ENCODE measurements at regions of chr15 and their contacts with region 1.

Region 1: DNA sequence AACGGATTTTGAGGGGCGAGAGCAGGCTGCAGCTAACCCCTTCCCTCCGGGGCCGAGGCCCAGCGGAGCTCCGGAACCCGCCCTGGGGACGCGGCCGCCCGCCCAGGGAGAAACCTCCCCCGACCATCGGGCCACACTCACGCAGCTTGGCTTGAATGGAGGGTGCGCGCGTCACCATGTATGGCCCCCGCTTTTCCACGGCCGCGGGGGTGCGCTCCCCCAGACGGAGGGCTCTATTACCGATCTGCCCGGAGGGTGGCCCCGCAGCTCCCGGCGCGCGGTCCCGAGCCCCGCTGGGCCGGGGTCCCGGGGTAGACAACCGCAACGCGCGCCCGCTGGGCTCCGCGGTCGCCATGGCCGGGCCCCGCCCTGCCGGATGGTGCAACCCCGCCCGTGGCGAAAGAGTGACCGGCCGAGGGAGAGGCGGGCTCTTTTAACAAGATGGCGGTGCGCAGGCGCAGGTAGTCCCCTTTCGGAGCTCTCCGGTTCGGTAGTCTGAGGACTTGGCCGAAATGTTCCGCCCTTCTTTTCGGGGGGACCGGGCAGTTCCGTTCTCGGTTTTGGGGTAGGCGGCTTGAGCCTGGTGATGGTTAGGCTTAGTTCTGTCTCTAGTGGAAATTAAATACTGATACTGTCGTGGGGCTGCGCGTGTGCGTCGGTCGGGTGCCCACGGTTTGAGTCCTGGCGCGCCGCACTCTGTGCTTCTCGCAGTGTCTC is at the start of gene FAM219B:
- DNase-seq: peak; percentile 60
- H3K4me3 ChIP-seq: peak within 1 kb of the TSS; percentile 81
- H3K27ac ChIP-seq: peak within 1 kb of the TSS; percentile 81
- H3K27me3 ChIP-seq: no peaks in the 10 kb centered on the region
- CTCF ChIP-seq: no peak
- polyA plus RNA-seq, gene FAM219B: 38.2 and 43.2 TPM in 2 replicates

Region 2: DNA sequence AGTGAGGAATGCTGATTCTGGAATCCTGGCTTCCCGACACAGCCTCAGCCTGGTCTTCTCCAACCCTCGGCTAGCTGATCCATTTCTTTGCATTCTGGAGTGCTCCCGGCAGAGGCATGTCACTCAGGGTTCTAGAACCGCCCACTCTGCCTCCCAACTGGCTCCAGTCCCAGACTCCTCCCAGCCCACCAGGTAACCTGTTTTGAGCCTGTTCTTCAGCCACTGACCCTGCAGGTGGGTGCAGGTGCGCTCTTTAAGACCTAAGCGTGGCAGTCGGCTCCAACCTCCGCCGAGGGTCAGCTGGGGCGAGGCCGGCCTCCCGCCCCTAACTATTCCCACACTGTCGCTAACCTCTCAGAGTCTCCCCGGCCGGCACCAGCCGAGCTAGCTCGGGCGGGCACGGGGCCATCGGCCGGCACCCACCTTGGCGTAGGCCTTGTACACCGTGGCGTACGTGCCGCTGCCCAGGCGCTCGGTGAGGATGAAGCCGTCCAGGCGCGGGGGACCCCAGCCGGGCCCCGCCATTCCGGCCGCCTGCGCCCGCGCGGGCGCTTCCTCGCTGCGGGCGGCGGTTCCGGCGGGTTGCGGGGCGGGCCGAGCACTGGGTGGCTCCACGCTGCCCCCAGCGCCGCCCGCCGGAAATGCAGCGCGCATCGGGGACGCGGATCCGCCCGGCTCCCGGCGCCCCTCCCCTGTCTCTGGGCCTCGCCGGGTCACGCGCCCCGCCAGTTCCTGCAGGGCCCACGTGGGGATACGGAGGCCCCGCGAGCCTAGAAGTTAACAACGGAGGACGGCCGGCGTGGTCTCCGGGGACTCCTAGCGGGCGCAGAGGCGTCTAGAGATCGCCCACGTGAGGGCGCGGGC is 63.8 kb before region 1 on chr15 and contains the start of gene ULK3:
- CTCF ChIA-PET with region 1: interaction called, 13 read pairs
- POLR2A ChIA-PET with region 1: no interaction called
- DNase-seq: peak; percentile 47
- H3K4me3 ChIP-seq: peak within 1 kb of the TSS; percentile 79
- H3K27ac ChIP-seq: peak within 1 kb of the TSS; percentile 77
- H3K27me3 ChIP-seq: no peaks in the 10 kb centered on the region
- CTCF ChIP-seq: peak; percentile 48
- polyA plus RNA-seq, gene ULK3: 14.2 and 18.6 TPM in 2 replicates

Region 3: GRCh38 chr15:74884428-74885223 is 22.0 kb before region 1 on chr15:
- CTCF ChIA-PET with region 1: interaction called, 61 read pairs
- POLR2A ChIA-PET with region 1: interaction called, 5 read pairs
- DNase-seq: no peak
- H3K4me3 ChIP-seq: no peak overlapping the region
- H3K27ac ChIP-seq: no peak overlapping the region
- H3K27me3 ChIP-seq: no peaks in the 10 kb centered on the region
- CTCF ChIP-seq: no peak

Region 4: GRCh38 chr15:74920456-74920855 is 13.9 kb after region 1 on chr15:
- CTCF ChIA-PET with region 1: interaction called, 47 read pairs
- POLR2A ChIA-PET with region 1: interaction called, 3 read pairs
- DNase-seq: no peak
- H3K4me3 ChIP-seq: no peak overlapping the region
- H3K27ac ChIP-seq: no peak overlapping the region
- H3K27me3 ChIP-seq: no peaks in the 10 kb centered on the region
- CTCF ChIP-seq: no peak